ENCODE measurements at regions of chr18 and their contacts with region 1.

Region 1: DNA sequence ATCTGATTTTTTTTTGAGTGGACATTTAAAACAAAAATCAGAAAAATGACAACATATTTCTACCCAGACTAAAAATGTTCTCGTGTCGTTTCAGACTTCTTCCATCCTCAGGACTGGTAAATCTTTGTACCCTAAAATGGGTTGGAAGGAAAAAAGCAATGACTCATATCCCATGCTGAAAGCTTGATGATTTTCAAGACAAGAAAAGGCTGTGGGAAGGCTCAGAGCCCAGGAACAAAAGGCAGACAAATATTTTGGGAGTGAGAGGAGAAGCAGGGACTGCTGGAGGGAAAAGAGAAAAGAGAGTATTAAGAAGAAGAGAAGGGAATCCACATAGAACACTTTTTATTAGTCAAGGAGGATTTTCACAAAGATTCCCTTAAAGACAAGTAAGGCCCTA is 77.1 kb upstream of the CTAGE1 start:
- DNase-seq: peak; percentile 64
- ATAC-seq: peak; percentile 39
- H3K4me3 ChIP-seq: no peak overlapping the region
- H3K27ac ChIP-seq: no peak overlapping the region
- H3K4me1 ChIP-seq: peaks cover 10% of the 10 kb centered on the region
- H3K27me3 ChIP-seq: no peaks in the 10 kb centered on the region
- CTCF ChIP-seq: no peak
- POLR2A ChIP-seq: no peak
- RAD21 ChIP-seq: no peak

Region 2: GRCh38 chr18:22556222-22557167 is 61.7 kb after region 1 on chr18:
- CTCF ChIA-PET with region 1: no interaction called
- POLR2A ChIA-PET with region 1: no interaction called
- dilution Hi-C with region 1: no loop called
- in situ Hi-C with region 1: no loop called
- intact Hi-C with region 1: loop called (anchors 2 kb)
- DNase-seq: peak; percentile 38
- ATAC-seq: no peak
- H3K4me3 ChIP-seq: no peak overlapping the region
- H3K27ac ChIP-seq: no peak overlapping the region
- H3K4me1 ChIP-seq: peaks cover 5% of the 10 kb centered on the region
- H3K27me3 ChIP-seq: no peaks in the 10 kb centered on the region
- CTCF ChIP-seq: no peak
- POLR2A ChIP-seq: no peak
- RAD21 ChIP-seq: no peak

Region 3: GRCh38 chr18:22846088-22846683 is 351.4 kb after region 1 on chr18:
- CTCF ChIA-PET with region 1: no interaction called
- POLR2A ChIA-PET with region 1: no interaction called
- dilution Hi-C with region 1: no loop called
- in situ Hi-C with region 1: no loop called
- intact Hi-C with region 1: no loop called
- DNase-seq: peak; percentile 25
- ATAC-seq: peak; percentile 56
- H3K4me3 ChIP-seq: no peak overlapping the region
- H3K27ac ChIP-seq: no peak overlapping the region
- H3K4me1 ChIP-seq: peaks cover 3% of the 10 kb centered on the region
- H3K27me3 ChIP-seq: no peaks in the 10 kb centered on the region
- CTCF ChIP-seq: peak; percentile 47
- POLR2A ChIP-seq: no peak
- RAD21 ChIP-seq: no peak; the same call in 1 of the 2 replicates

Region 4: DNA sequence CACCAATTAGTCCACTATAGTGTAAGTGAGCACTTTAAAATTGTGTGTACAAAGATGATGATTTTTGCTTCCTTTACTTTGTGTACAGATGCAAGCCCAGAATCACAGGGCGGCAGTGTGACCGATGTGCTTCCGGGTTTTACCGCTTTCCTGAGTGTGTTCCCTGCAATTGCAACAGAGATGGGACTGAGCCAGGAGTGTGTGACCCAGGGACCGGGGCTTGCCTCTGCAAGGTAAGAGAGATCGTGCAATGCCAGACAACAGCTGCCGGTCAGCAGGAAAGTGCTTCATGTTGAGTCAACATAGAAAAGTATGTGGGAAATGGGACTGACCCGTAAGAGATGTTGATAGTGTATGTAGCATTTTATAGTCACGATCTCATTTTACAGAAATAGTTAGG is 1363.0 kb after region 1 on chr18:
- CTCF ChIA-PET with region 1: no interaction called
- POLR2A ChIA-PET with region 1: no interaction called
- dilution Hi-C with region 1: no loop called
- in situ Hi-C with region 1: no loop called
- intact Hi-C with region 1: no loop called
- DNase-seq: peak; percentile 82
- ATAC-seq: peak; percentile 46; the same call in 1 of the 2 replicates
- H3K4me3 ChIP-seq: no peak overlapping the region
- H3K27ac ChIP-seq: no peak overlapping the region
- H3K4me1 ChIP-seq: peaks cover 20% of the 10 kb centered on the region
- H3K27me3 ChIP-seq: no peaks in the 10 kb centered on the region
- CTCF ChIP-seq: no peak
- POLR2A ChIP-seq: no peak
- RAD21 ChIP-seq: no peak